ENCODE measurements at regions of chr7 and their contacts with region 1.

Region 1: DNA sequence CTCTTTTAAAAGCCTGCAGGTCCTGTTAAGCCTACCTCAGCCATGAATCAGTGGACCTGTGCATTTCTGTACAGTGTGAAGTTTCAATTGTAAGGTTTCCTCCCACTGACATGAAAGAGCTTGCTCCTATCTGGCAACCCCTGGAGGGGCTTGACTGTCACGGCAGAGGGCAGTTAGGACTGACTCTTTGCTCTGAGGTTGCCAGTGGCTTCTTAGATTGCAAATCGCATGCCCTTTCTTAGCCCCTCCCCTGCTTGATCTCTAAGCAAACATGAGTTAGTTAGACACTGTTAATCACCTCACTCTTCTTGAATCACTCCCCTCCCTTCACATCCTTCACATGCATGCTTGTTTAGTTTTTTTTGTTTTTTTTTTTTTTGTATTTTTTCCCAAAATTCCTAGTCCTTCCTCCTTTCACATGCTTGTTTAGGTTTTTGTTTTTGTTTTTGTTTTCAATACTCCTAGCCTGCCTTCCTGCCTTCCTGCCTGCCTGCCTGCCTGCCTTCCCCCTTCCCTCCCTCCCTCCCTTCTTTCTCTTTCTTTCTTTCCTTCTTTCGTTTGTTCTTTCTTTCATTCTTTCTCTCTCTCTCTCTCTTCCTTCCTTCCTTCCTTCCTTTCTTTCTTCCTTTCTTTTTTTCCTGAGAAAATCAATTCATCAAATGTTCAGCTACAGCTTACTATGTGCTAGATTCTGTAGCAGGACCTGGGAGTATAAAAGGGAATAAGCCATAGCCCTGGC is 6.0 kb upstream of the HIPK2 start:
- DNase-seq: no peak
- H3K4me3 ChIP-seq: no peak overlapping the region
- H3K27ac ChIP-seq: no peak overlapping the region
- H3K4me1 ChIP-seq: peaks cover under 1% of the 10 kb centered on the region
- H3K27me3 ChIP-seq: peaks cover 43% of the 10 kb centered on the region
- CTCF ChIP-seq: no peak

Region 2: GRCh38 chr7:140165422-140165821 is 381.6 kb after region 1 on chr7:
- CTCF ChIA-PET with region 1: interaction called, 10 read pairs
- POLR2A ChIA-PET with region 1: no interaction called
- intact Hi-C with region 1: no loop called
- DNase-seq: peak; percentile 9
- H3K4me3 ChIP-seq: no peak overlapping the region
- H3K27ac ChIP-seq: peak overlapping the region; percentile 14
- H3K4me1 ChIP-seq: peaks cover 9% of the 10 kb centered on the region
- H3K27me3 ChIP-seq: no peaks in the 10 kb centered on the region
- CTCF ChIP-seq: no peak